ENCODE measurements at regions of chr1 and their contacts with region 1.

Region 1: DNA sequence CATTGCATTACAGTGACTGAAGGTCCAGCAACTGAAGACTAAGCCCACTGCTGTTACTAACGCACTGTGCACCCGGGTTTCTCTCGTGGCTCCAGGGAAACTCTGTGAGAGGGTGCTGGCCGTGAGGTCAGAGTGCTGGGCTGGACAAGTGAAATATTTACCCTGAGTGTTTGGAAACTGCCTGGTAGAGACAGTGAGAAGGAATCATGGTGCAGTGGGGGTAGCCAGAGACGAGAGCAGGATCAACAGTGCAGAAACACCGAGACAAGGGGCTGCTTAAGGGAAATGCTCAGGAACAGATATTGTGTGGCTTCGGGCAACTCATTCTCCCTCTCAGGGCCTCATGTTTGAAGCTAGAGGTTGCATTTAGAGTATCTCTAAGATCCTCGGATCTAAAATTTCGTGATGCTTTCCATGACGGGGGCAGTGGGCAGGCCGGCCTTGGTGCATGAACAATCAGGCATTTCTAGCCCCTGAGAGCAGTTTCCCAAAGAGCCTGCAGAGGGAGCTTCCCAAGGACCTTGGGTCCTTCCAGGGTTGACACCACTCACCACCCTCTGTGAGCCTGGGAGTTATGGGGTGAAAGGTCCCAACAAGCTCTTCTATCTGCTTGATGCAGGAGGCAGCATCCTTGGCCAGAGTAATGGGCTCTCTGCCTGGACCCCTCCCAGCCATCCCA is 9.7 kb downstream of the CD2 start:
- DNase-seq: peak; percentile 67
- H3K4me3 Mint-ChIP-seq: peak overlapping the region; percentile 78
- H3K27ac Mint-ChIP-seq: peak overlapping the region; percentile 99
- H3K4me1 Mint-ChIP-seq: peaks cover 96% of the 10 kb centered on the region
- H3K27me3 Mint-ChIP-seq: no peaks in the 10 kb centered on the region

Region 2: GRCh38 chr1:116711263-116711840 is 52.6 kb before region 1 on chr1:
- CTCF ChIA-PET with region 1: no interaction called
- POLR2A ChIA-PET with region 1: no interaction called
- DNase-seq: no peak
- H3K4me3 Mint-ChIP-seq: no peak overlapping the region
- H3K27ac Mint-ChIP-seq: no peak overlapping the region
- H3K4me1 Mint-ChIP-seq: peaks cover 7% of the 10 kb centered on the region
- H3K27me3 Mint-ChIP-seq: peaks cover 5% of the 10 kb centered on the region

Region 3: DNA sequence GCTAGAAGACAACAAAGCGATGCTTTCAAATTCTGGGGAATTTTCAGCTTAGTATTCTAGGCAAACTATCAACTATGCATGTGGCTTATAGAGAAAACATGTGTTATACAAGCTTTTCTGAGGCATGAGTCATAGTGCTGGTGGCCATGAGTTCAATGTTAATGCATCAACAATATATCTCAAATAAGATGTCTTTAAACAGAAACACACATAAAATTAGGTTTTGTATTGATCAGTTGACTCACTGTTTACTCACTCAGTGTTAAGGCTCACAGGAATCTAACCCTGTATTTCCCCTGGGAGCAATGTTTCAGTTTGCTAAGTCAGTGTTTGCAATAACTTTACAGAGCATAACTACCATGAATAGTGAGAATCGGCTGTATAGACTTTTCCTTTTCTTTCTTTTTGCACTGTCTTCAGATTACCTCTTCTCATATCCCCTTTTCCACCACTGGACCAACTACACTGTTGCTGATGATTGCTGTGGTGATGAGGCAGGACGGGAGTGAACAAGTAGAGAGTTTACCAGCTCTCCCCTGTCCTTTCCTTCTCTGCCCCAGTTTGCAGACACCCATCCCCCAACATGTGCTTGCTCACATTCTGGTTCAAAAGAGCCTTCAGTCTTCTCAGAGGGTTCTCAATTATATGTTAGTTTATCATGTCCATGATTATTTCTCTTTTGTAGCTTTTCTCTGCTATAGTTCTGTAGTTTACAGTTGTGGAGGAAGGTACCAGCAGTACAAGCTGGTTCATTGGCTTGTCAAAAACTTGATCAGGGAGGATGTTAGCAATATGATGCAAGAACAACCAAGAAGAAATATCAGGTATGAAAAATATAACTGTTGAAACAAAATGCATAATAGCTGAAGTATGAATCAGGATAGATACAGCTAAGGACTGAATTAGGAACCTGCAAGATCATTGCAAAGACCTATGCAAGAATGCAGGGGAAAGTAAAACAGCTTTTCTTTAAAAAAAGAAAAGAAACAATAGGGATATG is 14.2 kb after region 1 on chr1:
- CTCF ChIA-PET with region 1: interaction called, 5 read pairs
- POLR2A ChIA-PET with region 1: interaction called, 1,051 read pairs
- DNase-seq: no peak
- H3K4me3 Mint-ChIP-seq: peak overlapping the region; percentile 35
- H3K27ac Mint-ChIP-seq: peak overlapping the region; percentile 71
- H3K4me1 Mint-ChIP-seq: peaks cover 27% of the 10 kb centered on the region
- H3K27me3 Mint-ChIP-seq: no peaks in the 10 kb centered on the region

Region 4: GRCh38 chr1:116806245-116806644 is 42.3 kb after region 1 on chr1:
- CTCF ChIA-PET with region 1: interaction called, 139 read pairs
- POLR2A ChIA-PET with region 1: interaction called, 1,051 read pairs
- DNase-seq: peak; percentile 65
- H3K4me3 Mint-ChIP-seq: peak overlapping the region; percentile 79
- H3K27ac Mint-ChIP-seq: peak overlapping the region; percentile 95
- H3K4me1 Mint-ChIP-seq: peaks cover 86% of the 10 kb centered on the region
- H3K27me3 Mint-ChIP-seq: no peaks in the 10 kb centered on the region

Region 5: DNA sequence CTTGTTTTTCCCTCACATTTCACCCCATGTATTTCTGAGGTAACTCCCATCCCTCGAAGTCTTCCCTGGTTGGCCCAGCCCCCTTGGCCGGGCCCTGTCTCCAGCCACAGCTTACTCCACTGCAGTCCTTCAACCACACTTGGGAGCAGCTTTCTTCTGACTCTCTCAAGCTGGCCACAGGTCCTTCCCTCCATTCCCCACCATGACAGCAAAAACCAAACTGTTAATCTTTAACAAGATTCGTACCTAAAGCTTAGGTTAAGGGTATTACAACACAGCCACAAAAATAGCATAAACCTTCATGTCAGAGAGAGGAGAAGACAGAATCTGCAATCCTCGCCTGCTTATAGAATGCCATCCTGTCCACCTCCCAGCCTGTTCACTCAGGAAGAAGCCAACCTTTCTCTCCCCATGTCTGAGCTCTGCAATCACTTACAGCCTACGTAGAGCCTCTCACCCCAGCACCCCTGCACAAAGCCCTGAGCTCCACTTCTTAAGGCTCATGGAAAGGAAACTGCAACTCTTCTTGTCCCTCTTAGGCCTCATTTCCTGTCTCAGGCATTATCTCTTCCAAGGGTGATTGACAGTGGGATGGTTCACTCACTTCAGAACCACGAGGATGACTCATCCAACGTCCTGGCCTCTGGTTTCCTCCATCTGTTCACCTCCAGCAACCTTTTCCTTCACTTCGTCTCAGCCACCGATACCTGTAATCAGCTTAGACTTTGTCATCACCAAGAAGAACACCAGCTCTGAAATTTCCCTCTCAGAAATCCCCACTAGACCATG is 63.1 kb after region 1 on chr1:
- CTCF ChIA-PET with region 1: interaction called, 5 read pairs
- POLR2A ChIA-PET with region 1: interaction called, 21 read pairs
- DNase-seq: peak; percentile 77
- H3K4me3 Mint-ChIP-seq: peak overlapping the region; percentile 58
- H3K27ac Mint-ChIP-seq: peak overlapping the region; percentile 96
- H3K4me1 Mint-ChIP-seq: peaks cover 55% of the 10 kb centered on the region
- H3K27me3 Mint-ChIP-seq: no peaks in the 10 kb centered on the region

Region 6: DNA sequence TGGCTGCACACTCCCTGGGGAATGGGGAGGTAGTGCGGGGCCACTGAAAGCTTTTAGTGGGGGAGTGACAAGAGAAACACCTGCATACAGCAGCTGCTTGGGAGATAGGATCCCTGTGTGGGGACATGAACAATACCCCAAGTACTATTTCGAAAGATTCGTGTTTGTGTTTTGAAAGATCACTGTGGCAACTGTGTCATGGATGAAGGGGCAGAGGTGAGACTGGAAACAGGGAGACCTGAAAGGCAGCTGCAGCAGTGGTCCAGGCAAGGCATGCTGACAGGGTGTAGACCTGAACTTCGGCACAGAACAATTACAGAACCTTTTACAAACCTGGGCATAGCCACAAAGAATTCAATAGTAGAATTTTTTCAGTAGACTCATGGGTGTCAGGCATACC is 874.8 kb after region 1 on chr1:
- CTCF ChIA-PET with region 1: no interaction called
- POLR2A ChIA-PET with region 1: no interaction called
- DNase-seq: no peak
- H3K4me3 Mint-ChIP-seq: no peak overlapping the region
- H3K27ac Mint-ChIP-seq: no peak overlapping the region
- H3K4me1 Mint-ChIP-seq: peaks cover 17% of the 10 kb centered on the region
- H3K27me3 Mint-ChIP-seq: no peaks in the 10 kb centered on the region

Measured in activated CD4-positive, alpha-beta memory T cell treated with anti-CD3 and anti-CD28 coated beads, Interleukin-2, amount 10 ng/mL, durations not matched to agents 7 days and 5 days (primary cell).